ENCODE measurements at regions of chr7 and their contacts with region 1.

Region 1: GRCh38 chr7:121401896-121402295 is 5.8 kb upstream of the FAM3C start:
- DNase-seq: no peak

Region 2: GRCh38 chr7:121449329-121449728 is 47.4 kb after region 1 on chr7:
- intact Hi-C with region 1: loop called in 1 of 2 experiments (anchors 5 kb)
- DNase-seq: no peak

Measured in posterior vena cava (tissue), 2 donors.